HEK293 (cell line): ENCODE measurements at regions of chr20 and their contacts with region 1.

Region 1: DNA sequence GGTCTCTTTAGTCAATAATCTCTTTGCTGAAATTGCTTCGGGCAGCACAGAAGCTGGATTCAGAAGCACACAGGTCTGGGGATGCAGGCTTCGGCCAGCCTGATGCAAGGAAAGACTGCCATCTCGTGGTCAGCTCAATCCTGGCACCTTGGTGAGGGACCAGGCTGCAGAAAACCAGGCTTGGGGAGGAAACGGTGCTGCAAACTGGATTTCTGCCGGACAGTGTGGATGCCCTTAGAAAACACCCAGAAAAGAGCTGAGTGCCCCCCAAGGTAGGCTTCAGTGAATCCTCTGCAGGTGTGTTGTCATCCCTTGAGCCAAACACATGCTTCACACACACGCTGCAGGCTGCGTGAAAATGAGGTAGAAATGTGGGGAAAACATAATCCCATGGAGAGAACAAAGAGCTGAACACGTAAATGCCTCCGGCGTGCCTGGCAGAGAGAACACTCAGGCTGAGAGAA is 89.8 kb upstream of the PAX1 start:
- H3K4me3 ChIP-seq: no peak overlapping the region
- H3K27ac ChIP-seq: no peak overlapping the region
- H3K4me1 ChIP-seq: 0 out of 2 replicates have a peak, but pooled peaks cover 4% of the 10 kb centered on the region
- CTCF ChIP-seq: peak; percentile 75

Region 2: DNA sequence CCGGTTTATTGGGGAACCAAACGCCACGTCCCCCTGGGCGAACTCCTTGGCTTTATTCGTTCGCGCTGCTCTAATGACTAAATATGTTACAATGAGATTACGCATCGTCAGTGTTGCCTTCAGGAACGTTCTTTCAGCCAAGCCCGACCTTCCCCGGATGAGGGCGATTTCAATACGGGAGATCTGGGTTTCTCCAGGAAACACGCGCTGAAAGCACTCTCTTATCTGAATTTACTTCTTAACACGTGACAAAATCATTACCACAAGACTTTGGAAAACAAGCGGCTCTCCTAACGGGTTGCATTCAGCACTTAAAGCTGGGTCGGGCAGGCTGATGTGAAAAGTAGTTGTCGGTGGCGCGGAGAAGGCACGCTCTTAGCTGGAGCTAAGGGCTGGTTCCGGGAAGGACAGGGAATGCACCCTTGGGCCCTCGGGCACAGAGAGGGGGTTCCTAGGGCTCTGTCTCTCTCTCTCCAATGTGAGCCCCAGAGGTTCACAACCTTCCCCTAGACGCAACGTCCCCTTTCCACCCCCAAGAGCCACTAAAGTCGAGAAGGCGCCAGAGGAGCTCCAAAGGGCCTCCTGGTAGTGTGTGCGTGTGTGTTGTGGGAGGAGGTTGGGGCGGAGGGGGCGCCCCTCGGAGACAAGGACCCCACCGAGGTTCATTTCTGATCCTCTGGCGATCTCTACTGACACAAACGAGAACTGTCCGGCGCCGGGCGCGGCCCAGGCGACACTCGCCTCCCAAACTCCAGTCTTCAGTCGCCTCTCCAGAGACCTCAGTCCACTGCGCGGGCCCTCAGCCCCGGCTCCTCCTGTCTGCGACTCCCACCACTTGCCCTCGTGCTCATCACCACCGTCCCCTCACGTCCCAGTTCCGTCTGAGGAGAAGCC is 94.7 kb before region 1 on chr20:
- CTCF ChIA-PET with region 1: interaction called, 18 read pairs
- POLR2A ChIA-PET with region 1: no interaction called
- H3K4me3 ChIP-seq: peak overlapping the region; percentile 50
- H3K27ac ChIP-seq: peak overlapping the region; percentile 72; the same call in 1 of the 2 replicates
- H3K4me1 ChIP-seq: peaks cover 3% of the 10 kb centered on the region; the same call in 1 of the 2 replicates
- CTCF ChIP-seq: peak; percentile 94

Region 3: GRCh38 chr20:21529863-21530262 is 85.8 kb before region 1 on chr20:
- CTCF ChIA-PET with region 1: interaction called, 10 read pairs
- POLR2A ChIA-PET with region 1: no interaction called
- H3K4me3 ChIP-seq: no peak overlapping the region
- H3K27ac ChIP-seq: no peak overlapping the region
- H3K4me1 ChIP-seq: no peaks in the 10 kb centered on the region
- CTCF ChIP-seq: no peak

Region 4: GRCh38 chr20:21601799-21602198 is 13.8 kb before region 1 on chr20:
- CTCF ChIA-PET with region 1: interaction called, 12 read pairs
- POLR2A ChIA-PET with region 1: no interaction called
- H3K4me3 ChIP-seq: no peak overlapping the region
- H3K27ac ChIP-seq: no peak overlapping the region
- H3K4me1 ChIP-seq: no peaks in the 10 kb centered on the region
- CTCF ChIP-seq: no peak

Region 5: DNA sequence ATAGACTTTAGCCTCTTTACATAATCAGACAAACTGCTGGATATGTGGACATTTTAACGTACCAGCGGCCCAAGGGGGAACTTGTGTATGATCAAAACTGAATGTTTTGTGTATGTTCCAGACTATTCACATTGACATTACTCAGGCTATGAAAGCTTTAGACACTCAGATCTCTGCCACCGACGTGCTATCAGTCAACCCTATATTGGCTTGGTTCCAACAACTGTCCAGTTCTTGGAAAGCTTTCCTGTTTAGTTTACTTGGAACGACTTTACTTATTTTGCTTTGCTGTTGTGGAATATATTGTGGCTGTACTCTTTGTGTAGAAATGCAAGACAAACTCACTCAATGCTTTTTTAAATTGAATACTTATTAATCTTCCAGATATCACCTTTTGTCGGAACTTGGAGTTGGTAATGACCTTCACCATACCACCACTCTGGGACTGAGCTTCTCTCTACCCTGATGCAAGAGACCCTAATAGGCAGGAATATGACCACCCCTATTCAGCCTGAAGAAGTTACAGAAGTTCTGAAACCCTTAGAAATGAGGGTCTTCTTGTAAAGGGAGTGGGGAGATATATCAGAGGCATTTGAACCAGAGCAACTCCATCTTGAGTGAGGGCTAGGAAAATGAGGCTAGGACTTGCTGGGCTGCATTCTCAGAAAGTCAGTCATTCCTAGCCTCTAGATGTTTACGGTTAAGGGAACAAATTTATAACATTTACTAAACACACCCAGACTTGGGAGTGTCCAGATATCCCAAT is 40.8 kb after region 1 on chr20:
- CTCF ChIA-PET with region 1: no interaction called
- POLR2A ChIA-PET with region 1: no interaction called
- H3K4me3 ChIP-seq: no peak overlapping the region
- H3K27ac ChIP-seq: no peak overlapping the region
- H3K4me1 ChIP-seq: 0 out of 2 replicates have a peak, but pooled peaks cover 2% of the 10 kb centered on the region
- CTCF ChIP-seq: no peak